ENCODE measurements at regions of chr20 and their contacts with region 1.

Region 1: DNA sequence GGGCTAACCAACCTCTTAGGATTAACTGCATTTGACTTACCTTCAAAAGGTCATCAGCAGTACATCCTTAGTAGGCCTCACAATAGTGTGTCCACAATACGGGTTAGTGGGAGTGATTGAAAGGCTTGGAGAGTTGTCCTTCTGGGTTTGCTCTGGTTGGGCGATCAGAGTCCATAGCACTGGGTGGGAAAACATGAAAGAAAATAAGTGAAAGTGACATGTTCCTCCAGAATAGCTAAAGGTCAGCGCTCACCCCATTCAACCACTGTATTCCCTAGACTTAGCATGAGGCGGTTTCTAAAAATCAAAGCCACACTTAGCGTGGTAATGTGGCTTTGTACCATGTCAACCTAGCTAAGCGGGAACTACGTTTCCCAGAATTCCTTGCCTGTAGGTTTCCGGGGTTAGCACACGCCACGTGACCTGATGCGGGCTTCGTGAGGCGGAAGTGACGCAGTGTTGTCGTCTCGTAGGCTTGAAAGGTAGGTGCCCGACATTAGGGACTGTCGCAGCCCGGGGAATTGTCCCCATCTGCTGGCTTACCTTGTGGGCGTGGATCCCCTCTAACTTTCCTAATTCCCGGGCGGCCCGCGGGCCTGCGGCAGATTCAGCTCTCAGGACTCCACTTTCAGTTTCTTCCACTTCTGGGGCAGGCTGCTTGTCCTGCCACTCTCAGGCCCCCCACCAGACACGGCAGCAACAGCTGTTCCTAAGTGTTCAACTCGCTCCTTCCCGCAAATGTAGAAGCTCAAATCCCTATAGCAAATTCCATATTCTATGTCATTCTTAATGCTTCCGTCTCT is 19.8 kb upstream of the SCP2D1 start:
- DNase-seq: peak; percentile 80
- H3K4me3 Mint-ChIP-seq: peak overlapping the region; percentile 87
- H3K27ac Mint-ChIP-seq: peak overlapping the region; percentile 82
- H3K4me1 Mint-ChIP-seq: peaks cover 12% of the 10 kb centered on the region
- H3K27me3 Mint-ChIP-seq: no peaks in the 10 kb centered on the region

Region 2: DNA sequence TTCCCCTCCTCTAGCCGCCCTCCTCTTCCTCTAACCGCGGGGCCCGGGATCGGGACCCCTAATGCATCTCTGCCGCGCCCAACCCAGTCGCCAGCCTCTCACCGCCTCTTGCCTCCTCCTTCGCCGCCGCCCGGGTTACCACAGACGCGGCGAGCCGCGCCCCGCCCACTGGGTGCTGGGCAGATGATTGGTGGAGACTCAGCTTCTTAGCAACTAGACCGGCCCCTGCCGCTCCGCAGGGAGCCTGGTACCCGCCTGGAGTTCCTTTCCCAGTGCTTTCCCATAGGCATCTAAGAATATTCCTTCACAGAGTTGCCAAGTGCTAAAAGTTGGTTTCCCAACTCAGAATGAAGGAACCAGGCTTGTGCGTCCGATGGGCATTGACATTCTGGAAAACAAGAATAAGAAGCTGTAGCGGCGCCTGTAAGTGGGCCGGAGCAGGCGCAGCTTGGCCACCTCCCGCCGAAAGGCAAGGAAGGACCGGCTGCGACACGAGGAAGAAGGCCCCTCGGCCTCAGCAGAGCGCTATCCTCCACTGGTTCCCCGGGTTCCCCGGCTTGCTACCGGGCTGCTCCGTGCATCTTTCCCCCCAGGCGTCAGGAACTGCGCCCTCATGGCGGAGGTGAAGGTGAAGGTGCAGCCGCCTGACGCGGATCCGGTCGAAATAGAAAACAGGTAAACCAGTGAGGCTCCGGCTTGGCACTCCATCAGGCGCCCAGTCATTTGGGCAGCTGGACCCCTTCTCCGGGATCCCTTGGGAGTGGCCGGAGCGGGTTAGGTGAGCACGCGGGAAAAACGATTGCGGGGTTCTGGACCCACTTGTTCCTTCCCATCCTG is 326.7 kb before region 1 on chr20 and contains the starts of genes DZANK1 and POLR3F:
- intact Hi-C with region 1: loop called (anchors 1 kb)
- DNase-seq: peak; percentile 90
- H3K4me3 Mint-ChIP-seq: peak within 1 kb of the TSS; percentile 99
- H3K27ac Mint-ChIP-seq: peak within 1 kb of the TSS; percentile 92
- H3K4me1 Mint-ChIP-seq: peaks cover 31% of the 10 kb centered on the region
- H3K27me3 Mint-ChIP-seq: no peaks in the 10 kb centered on the region
- total RNA-seq, gene DZANK1: 1.1 and 1.8 TPM in 2 replicates
- total RNA-seq, gene POLR3F: 13.4 and 16.6 TPM in 2 replicates

Region 3: GRCh38 chr20:18587665-18588573 is 205.9 kb before region 1 on chr20 and contains the start of gene DTD1:
- intact Hi-C with region 1: loop called (anchors 2 kb)
- DNase-seq: peak; percentile 80
- H3K4me3 Mint-ChIP-seq: peak within 1 kb of the TSS; percentile 93
- H3K27ac Mint-ChIP-seq: peak within 1 kb of the TSS; percentile 82
- H3K4me1 Mint-ChIP-seq: peaks cover 25% of the 10 kb centered on the region
- H3K27me3 Mint-ChIP-seq: peaks cover 10% of the 10 kb centered on the region
- total RNA-seq, gene DTD1: 37.7 and 44.0 TPM in 2 replicates

Region 4: DNA sequence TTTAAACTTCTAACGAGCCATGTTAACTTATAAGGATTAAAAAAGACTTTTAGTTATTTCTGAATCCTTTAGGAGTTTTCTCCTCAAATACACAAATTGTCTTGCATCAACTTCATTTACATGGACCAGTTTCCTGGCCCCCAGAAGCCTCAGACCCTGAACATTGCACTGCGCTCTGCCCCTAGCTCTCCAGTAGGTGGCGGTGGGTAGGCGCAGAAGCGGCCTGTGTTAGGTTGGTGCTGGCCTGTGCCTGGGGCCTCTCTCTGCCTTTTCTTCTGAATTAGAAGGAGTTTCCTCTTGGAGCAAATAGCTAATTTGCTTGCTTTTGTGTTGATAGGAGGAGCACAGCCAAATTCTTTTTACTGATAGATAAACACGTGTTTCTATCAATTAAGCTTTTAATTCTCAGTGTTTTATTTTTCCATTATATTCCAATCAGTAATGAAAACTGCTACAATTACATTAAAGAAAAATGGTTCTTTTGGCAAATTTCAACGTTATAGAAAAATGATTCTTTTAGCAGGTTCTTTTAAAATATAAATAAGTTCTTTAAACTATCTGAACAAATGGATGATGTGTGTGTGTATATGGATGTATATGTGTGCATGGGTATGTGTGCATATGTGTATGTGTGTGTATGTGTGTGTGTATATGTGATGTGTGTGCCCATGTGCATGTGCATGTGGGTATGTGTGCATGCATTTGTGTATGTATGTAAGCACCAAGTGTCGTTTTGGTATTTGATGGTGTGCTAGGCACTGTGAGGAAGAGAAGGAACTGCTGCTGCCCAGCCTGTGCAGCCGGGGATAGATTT is 161.4 kb before region 1 on chr20:
- intact Hi-C with region 1: loop called (anchors 5 kb)
- DNase-seq: peak; percentile 19
- H3K4me3 Mint-ChIP-seq: no peak overlapping the region
- H3K27ac Mint-ChIP-seq: no peak overlapping the region
- H3K4me1 Mint-ChIP-seq: no peaks in the 10 kb centered on the region
- H3K27me3 Mint-ChIP-seq: no peaks in the 10 kb centered on the region

Region 5: GRCh38 chr20:20017001-20017843 is 1223.4 kb after region 1 on chr20 and contains the start of gene NAA20:
- intact Hi-C with region 1: loop called (anchors 10 kb)
- DNase-seq: peak; percentile 88
- H3K4me3 Mint-ChIP-seq: peak within 1 kb of the TSS; percentile 90
- H3K27ac Mint-ChIP-seq: peak within 1 kb of the TSS; percentile 86
- H3K4me1 Mint-ChIP-seq: peaks cover 44% of the 10 kb centered on the region
- H3K27me3 Mint-ChIP-seq: no peaks in the 10 kb centered on the region
- total RNA-seq, gene NAA20: 86.3 and 89.9 TPM in 2 replicates